ENCODE measurements at regions of chr9 and their contacts with region 1.

Region 1: GRCh38 chr9:126965541-126966428 is 51.2 kb downstream of the RALGPS1 start:
- DNase-seq: peak in 4 of 5 donors; percentile 35 to 49 (median 42)
- H3K4me3 ChIP-seq: no peak overlapping the region
- H3K4me3 Mint-ChIP-seq: no peak overlapping the region
- H3K27ac ChIP-seq: no peak overlapping the region
- H3K27ac Mint-ChIP-seq: peak overlapping the region in 1 of 7 donors; percentile 48
- H3K4me1 ChIP-seq: no peaks in the 10 kb centered on the region
- H3K4me1 Mint-ChIP-seq: peaks cover 6 to 13% (median 10%) of the 10 kb centered on the region in 4 donors
- H3K27me3 ChIP-seq: no peaks in the 10 kb centered on the region
- H3K27me3 Mint-ChIP-seq: peaks cover 0 to 1% of the 10 kb centered on the region in 2 donors

Region 2: DNA sequence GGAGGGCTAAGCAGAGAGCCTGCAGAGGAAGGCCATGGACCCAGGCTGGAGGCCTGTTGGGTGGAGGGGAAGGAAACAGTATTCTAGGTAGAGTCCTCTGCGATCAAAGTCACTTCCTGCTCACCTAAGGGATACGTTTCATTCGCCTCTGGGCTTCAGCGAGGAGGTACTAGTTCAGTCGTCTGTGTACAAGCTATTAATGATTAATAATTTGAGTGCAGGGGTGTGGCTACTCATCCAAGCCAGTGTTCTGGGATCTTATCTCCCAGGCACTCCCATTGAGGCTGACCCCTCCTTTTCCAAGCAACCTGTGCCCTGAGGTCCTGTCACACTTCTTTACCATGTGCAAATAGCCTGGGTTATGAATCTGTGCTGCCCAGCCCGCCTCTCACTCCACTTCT is 26.0 kb before region 1 on chr9:
- CTCF ChIA-PET with region 1: interaction called, 15 read pairs
- POLR2A ChIA-PET with region 1: no interaction called
- intact Hi-C with region 1: no loop called
- DNase-seq: no peak
- H3K4me3 ChIP-seq: no peak overlapping the region
- H3K4me3 Mint-ChIP-seq: no peak overlapping the region
- H3K27ac ChIP-seq: no peak overlapping the region
- H3K27ac Mint-ChIP-seq: no peak overlapping the region
- H3K4me1 ChIP-seq: peaks cover 4% of the 10 kb centered on the region
- H3K4me1 Mint-ChIP-seq: peaks cover 4 to 11% (median 5%) of the 10 kb centered on the region in 4 donors
- H3K27me3 ChIP-seq: no peaks in the 10 kb centered on the region
- H3K27me3 Mint-ChIP-seq: no peaks in the 10 kb centered on the region

Measured in CD4-positive, alpha-beta memory T cell (primary cell).